ENCODE measurements at regions of chr3 and their contacts with region 1.

Region 1: DNA sequence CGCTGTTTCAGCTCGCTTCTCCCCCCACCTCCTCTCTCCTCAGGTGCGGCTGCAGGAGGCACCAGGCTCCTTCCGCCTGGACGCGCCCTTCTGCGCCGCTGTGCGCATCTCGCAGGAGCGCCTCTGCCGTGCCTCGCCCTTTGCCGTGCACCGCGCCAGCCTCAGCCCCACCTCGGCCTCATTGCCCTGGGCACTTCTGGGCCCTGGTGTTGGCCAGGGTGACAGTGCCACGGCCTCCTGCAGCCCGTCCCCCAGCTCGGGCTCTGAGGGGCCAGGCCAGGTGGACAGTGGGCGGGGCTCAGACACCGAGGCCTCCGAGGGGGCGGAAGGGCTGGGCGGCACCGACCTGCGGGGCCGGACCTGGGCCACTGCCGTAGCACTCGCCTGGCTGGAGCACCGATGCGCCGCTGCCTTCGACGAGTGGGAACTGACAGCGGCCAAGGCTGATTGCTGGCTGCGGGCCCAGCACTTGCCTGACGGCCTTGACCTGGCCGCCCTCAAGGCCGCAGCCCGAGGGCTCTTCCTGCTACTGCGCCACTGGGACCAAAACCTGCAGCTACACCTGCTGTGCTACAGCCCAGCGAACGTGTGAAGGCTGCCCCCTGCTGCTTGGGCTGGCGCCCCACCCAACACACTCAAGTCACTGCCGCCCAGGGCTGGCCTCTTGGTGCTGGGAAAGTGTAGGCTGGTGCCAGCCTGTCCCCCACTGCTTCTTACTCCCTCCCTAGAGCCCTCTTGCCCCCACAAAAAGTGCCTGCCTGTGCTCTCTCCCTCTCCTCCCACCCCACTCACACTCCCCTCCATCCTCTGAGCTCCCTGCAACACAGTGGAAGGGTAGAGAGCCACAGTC is 7.1 kb downstream of the ALG3 start:
- DNase-seq: peak; percentile 78
- H3K4me3 ChIP-seq: peak overlapping the region; percentile 32
- H3K27ac ChIP-seq: peak overlapping the region; percentile 3
- H3K4me1 ChIP-seq: no peaks in the 10 kb centered on the region
- H3K27me3 ChIP-seq: no peaks in the 10 kb centered on the region
- CTCF ChIP-seq: peak; percentile 61

Region 2: GRCh38 chr3:184143327-184143726 is 98.3 kb before region 1 on chr3:
- intact Hi-C with region 1: loop called (anchors 5 kb)
- DNase-seq: no peak
- H3K4me3 ChIP-seq: no peak overlapping the region
- H3K27ac ChIP-seq: no peak overlapping the region
- H3K4me1 ChIP-seq: no peaks in the 10 kb centered on the region
- H3K27me3 ChIP-seq: no peaks in the 10 kb centered on the region
- CTCF ChIP-seq: no peak

Region 3: GRCh38 chr3:184568924-184569829 is 327.5 kb after region 1 on chr3:
- intact Hi-C with region 1: no loop called
- DNase-seq: peak; percentile 84
- H3K4me3 ChIP-seq: peak overlapping the region; percentile 46
- H3K27ac ChIP-seq: peak overlapping the region; percentile 44
- H3K4me1 ChIP-seq: peaks cover 29% of the 10 kb centered on the region
- H3K27me3 ChIP-seq: no peaks in the 10 kb centered on the region
- CTCF ChIP-seq: no peak

Region 4: DNA sequence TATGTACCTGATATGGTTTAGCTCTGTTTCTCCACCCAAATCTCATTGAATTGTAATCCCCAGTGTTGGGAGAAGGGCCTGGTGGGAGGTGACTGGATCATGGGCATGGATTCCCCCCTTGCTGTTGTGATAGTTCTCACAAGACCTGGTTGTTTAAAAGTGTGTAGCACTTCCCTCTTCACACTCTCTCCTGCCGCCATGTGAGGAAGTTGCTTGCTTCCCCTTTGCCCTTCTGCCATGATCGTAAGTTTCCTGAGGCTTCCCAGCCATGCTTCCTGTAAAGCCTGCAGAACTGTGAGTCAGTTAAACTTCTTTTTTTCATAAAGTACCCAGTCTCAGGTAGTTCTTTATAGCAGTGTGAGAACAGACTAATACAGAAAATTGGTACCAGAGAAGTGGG is 818.1 kb after region 1 on chr3:
- intact Hi-C with region 1: no loop called
- DNase-seq: peak; percentile 18
- H3K4me3 ChIP-seq: no peak overlapping the region
- H3K27ac ChIP-seq: no peak overlapping the region
- H3K4me1 ChIP-seq: no peaks in the 10 kb centered on the region
- H3K27me3 ChIP-seq: no peaks in the 10 kb centered on the region
- CTCF ChIP-seq: no peak

Measured in colonic mucosa (tissue), 4 donors.